ENCODE measurements at regions of chr18 and their contacts with region 1.

Region 1: DNA sequence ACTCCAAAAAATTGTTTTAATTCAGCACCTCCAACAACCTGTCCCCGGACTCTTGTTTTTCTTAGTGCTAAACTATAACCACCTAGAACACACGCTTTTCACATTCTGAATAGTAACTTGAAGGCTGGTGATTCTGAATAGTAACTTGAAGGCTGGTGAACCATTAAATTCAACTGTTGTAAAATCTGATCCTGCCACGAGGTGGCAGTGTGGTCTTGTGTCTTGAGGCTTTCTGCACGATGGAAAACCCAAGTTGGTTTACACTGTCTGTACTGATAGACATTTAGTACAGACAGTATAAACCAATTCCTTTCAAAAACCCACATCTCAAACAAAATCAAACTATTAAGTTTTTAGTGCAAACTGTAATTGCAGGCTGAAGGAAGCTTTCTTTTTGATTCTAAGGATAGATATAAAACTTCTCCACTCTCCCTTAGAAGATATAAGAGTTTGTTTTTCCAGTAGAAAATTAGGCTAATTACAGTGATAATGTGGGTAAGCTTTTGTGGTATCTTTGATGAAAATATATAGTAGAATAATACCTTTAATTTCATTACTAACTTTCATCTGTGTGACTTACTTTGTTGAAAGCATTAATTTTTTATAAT is 57.6 kb downstream of the VAPA start:
- DNase-seq: peak; percentile 55
- H3K4me3 Mint-ChIP-seq: no peak overlapping the region
- H3K27ac Mint-ChIP-seq: no peak overlapping the region
- H3K4me1 Mint-ChIP-seq: no peaks in the 10 kb centered on the region
- H3K27me3 Mint-ChIP-seq: peaks cover 16% of the 10 kb centered on the region

Region 2: DNA sequence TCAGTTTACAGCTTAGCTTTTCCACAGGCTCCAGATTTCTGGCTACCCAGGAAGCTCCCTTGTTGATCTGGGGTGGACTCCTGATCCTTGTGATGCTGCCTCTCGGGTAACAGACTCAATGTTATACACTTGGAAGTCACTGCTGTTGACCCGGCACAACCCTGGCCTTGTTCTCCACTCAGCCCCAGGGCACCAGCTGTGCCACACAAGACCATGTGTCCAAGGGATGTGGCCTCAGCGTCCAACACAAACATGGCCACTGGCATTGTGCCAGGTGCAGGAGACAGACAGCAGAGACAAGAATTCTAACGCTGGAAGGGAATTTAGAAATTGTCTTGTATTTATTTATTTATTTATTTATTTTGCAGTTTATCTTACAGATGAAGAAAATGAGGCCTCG is 318.0 kb before region 1 on chr18:
- intact Hi-C with region 1: no loop called
- DNase-seq: no peak
- H3K4me3 Mint-ChIP-seq: no peak overlapping the region
- H3K27ac Mint-ChIP-seq: no peak overlapping the region
- H3K4me1 Mint-ChIP-seq: no peaks in the 10 kb centered on the region
- H3K27me3 Mint-ChIP-seq: peaks cover 5% of the 10 kb centered on the region

Region 3: DNA sequence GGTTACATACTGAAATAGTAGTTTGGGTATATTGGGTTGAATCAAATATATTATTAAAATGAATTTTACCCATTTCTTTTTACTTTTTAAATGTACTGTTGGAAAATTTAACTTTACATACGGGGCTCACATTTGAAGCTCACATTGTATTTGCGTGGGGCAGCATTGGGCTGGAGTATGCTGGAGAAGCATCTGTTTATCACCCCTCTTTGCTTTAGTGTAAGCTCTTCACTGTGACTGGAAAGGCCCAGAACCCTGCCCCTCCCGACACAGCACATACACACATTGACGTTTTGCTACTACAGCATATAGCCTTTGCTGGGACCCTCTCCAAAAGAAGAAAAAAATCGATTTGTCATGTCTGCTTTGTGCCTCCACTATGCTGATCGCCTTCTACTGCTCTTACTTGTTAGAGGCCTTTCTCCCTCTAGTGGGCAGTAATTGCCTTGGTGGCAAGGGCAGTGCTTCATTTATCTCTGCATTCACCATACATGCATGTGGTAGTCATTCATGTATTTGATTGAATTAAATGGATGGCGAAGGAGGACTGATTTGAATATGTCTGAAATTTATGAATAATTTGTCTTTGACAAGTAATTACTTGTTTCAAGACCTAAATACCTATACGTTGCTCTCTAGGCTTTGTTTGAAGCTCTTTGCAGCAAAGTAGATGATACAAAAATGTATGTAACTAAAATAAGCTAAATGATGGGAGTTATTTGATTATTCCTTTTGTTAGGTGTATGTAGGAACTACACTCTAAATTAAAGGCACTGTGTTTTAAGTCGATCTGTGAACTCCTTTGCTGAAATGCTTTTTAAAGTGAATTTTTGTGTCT is 20.2 kb before region 1 on chr18:
- intact Hi-C with region 1: no loop called
- DNase-seq: no peak
- H3K4me3 Mint-ChIP-seq: no peak overlapping the region
- H3K27ac Mint-ChIP-seq: no peak overlapping the region
- H3K4me1 Mint-ChIP-seq: peaks cover 9% of the 10 kb centered on the region
- H3K27me3 Mint-ChIP-seq: no peaks in the 10 kb centered on the region

Region 4: DNA sequence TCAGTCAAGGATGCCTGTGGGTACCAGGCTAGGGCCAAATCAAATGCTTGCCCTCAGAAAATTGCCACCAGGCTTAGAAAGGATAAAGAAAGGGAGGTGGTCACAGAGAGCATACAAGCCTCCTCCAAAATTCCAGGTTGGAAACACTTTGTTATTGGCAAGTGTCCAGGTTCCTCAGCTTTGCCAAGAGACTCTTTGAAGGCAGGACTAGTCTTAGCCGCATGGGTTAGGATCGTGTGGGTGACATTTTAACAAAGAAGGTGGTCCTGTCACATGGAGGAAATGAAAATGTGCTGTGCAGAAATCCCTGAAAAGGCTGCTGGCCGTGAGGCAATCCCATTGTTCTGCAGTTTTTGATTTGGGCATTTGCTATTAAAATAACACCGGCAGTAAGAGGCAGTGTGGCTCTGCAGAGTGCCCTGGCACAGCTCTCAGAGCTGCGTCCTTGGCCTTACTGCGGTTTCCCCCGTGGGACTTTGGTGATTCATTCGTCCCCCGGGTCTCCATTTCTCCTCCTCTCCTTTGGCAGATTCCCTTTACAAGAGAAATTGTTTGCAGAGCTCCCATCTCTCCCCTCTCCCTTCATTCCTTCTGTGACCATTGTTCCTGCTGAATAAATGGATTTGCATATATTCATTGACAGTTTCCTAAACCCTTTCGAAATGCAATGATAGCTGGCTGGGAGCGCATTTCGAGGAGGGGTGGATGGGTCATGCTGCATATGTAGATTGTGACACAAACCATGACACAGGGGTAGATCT is 129.7 kb after region 1 on chr18:
- intact Hi-C with region 1: no loop called
- DNase-seq: no peak
- H3K4me3 Mint-ChIP-seq: no peak overlapping the region
- H3K27ac Mint-ChIP-seq: no peak overlapping the region
- H3K4me1 Mint-ChIP-seq: no peaks in the 10 kb centered on the region
- H3K27me3 Mint-ChIP-seq: peaks cover 5% of the 10 kb centered on the region

Region 5: GRCh38 chr18:10391506-10391905 is 420.1 kb after region 1 on chr18:
- intact Hi-C with region 1: loop called (anchors 10 kb)
- DNase-seq: no peak
- H3K4me3 Mint-ChIP-seq: no peak overlapping the region
- H3K27ac Mint-ChIP-seq: no peak overlapping the region
- H3K4me1 Mint-ChIP-seq: peaks cover 19% of the 10 kb centered on the region
- H3K27me3 Mint-ChIP-seq: peaks cover 21% of the 10 kb centered on the region

Region 6: DNA sequence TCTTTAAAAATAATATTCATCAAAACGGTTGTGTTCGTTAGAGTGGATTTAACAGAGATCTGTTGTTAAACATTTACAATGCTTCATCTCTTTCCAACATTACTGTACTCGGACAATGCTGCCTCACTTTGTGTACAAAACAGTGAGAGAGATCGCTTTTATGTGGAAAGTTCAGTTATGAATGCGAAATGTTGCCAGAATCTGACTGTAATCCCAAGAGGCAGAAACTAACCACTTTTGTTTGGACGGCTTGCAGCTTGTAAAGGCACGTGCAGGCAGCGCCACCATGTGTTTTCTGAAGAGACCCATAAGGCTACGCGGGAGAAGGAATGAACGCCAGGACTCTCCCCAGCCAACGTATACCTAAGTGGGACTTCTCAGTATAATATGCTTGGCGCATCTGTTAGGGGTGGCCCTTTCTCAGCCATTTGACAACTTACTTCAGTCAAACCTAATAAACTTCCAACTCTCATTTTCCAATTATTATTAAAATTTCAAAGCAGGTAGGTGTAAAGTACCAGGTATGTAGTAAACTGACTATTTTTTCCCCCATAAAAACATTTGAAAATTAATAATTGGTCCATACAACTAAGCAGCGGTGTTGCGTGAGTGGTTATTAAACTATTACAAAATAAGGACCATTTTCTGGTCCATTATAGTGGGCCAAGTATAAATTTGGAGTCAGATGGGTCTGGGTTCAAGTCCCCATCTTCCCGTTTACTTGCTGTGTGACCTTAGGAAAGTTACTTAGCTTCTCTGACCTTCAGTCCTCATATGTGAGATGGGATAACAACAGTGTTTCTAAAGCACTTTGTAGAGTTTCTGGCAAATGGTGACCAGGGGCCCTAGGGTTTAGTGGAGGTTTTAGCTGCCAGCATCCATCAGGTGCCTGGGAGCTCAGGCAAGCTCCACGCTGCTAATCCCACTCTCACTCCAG is 548.9 kb after region 1 on chr18:
- intact Hi-C with region 1: loop called (anchors 1 kb)
- DNase-seq: peak; percentile 35
- H3K4me3 Mint-ChIP-seq: no peak overlapping the region
- H3K27ac Mint-ChIP-seq: no peak overlapping the region
- H3K4me1 Mint-ChIP-seq: peaks cover 28% of the 10 kb centered on the region
- H3K27me3 Mint-ChIP-seq: peaks cover 38% of the 10 kb centered on the region

Region 7: DNA sequence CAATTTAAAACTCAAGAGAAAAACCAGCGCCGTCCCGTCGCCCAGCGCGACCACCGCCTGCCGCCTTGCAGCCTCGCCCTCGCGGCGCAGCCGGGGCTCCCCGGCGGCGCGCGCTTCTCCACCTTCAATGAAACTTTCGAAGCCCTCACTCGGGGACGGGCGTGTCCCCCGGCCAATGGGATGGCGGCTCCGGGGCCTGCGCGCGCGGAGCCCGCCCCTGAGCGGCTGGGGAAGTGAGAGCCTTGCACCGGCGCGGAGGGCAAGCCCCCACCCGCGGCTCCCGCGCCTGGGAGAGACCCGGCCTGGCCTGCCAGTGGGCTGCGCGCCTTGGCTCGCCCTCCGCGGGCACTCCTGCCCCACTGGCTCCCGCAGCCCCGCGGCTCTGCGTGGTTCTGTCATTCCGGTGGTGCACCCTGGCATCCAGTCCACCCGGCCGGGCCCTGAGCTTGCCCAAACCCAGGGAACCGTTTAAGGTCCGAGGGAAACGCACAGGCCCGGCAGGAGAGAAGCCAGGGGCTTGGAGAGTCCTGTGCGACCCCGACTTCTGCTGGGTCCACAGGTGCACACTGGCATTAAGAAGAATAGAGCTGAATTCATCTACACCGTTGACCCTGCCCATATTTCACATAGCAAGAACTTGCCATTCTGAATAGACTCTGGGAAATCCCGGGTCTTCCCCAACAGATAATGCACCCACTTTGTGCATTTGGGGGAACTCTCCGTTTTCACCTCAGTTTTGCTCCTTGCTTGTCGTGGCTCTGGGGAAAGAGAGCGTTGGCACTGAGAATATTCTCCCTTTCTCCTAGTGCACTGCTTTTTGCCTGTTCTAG is 1178.2 kb after region 1 on chr18 and contains the start of gene PIEZO2:
- intact Hi-C with region 1: loop called (anchors 2 kb)
- DNase-seq: no peak
- H3K4me3 Mint-ChIP-seq: no peak within 1 kb of the TSS
- H3K27ac Mint-ChIP-seq: no peak within 1 kb of the TSS
- H3K4me1 Mint-ChIP-seq: no peaks in the 10 kb centered on the region
- H3K27me3 Mint-ChIP-seq: peaks cover 31% of the 10 kb centered on the region
- total RNA-seq, gene PIEZO2: not detected in 2 replicates